ENCODE measurements at regions of chr3 and their contacts with region 1.

Region 1: GRCh38 chr3:115147329-115148141 is 447 bp upstream of the ZBTB20 start:
- DNase-seq: peak; percentile 97
- H3K4me3 Mint-ChIP-seq: peak overlapping the region; percentile 87
- H3K27ac Mint-ChIP-seq: peak overlapping the region; percentile 95
- H3K4me1 Mint-ChIP-seq: peaks cover 19% of the 10 kb centered on the region
- H3K27me3 Mint-ChIP-seq: no peaks in the 10 kb centered on the region

Region 2: DNA sequence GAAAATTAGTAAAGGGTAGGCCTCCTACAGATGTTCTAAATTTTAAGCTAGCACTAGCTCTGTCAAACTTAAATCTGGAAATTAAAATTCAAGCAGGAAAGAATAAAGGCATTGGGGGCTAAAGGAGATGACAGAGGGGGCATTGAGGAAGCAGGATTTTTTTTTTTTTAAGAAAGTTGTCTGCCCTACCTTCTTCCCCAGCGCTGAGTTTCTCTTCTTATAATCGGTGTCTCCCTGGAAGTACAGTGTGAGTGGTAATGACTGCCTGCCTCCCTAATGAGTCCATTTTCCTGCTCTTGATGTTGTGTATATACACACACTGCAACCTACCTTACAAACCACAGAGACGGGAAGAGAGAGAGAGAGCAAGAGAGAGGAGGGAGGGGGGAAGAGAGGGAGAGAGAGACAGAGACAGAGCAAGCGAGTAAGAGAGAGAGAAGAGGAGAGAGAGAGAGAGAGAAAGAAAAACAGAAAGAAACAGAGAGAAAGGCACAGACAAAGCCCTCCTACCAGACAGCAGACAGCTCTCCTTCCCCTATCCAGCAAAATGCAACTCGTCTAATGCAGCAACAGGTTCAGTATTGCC is 47.5 kb before region 1 on chr3:
- CTCF ChIA-PET with region 1: interaction called, 7 read pairs
- POLR2A ChIA-PET with region 1: interaction called, 19 read pairs
- DNase-seq: peak; percentile 26
- H3K4me3 Mint-ChIP-seq: peak overlapping the region; percentile 54
- H3K27ac Mint-ChIP-seq: peak overlapping the region; percentile 19
- H3K4me1 Mint-ChIP-seq: peaks cover 16% of the 10 kb centered on the region
- H3K27me3 Mint-ChIP-seq: no peaks in the 10 kb centered on the region

Region 3: DNA sequence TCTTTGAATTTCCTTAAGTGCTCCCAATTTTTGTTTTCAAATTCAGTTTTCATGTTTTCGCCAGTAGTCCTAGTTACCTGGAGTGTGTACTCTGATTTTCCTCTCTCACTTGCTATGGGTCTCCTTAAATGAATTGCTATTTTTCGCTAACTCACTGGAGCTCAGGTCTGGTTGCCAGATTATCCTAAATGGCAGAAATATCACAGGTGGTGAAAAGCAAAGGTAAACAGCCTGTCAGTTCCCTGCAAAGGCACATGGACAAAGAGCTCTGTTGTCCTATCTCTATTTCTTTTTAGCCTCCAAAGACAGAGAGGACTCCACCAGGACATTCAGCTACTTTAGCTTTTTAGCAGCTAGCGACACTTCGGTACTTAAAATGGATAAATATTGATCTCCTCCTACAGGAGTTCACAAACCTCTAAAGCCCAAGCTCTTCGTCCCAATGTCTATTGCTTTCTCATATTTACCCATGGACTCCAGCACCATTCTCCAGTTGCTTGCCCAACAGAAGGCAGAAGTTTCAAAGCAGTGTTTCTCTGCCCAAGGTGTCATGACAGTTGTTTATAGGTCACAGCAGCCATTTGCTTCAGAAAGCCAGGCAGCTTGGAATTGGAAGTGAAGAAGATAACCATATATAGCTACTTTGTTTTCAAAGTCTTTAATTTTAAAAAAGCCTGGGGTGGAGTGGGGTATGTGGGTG is 12.7 kb before region 1 on chr3:
- CTCF ChIA-PET with region 1: no interaction called
- POLR2A ChIA-PET with region 1: interaction called, 24 read pairs
- DNase-seq: no peak
- H3K4me3 Mint-ChIP-seq: no peak overlapping the region
- H3K27ac Mint-ChIP-seq: no peak overlapping the region
- H3K4me1 Mint-ChIP-seq: no peaks in the 10 kb centered on the region
- H3K27me3 Mint-ChIP-seq: no peaks in the 10 kb centered on the region

Region 4: DNA sequence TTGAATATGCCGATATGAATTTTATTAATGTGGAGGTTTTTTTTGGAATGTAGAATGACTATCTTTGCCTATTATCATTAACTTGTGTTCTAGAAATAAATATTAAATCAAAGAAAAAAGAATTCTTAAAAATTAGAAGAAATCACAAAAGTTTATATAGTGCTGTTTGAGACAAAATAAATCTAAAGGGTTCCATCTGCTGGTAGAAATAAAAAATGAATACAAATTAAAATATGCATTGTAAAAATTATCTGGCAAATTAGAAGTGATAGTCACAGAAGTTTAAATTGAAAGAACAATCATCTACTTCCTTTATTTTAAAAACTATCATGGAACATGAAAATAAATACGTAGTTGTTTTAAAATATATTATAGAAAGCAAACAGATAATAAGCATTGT is 22.3 kb after region 1 on chr3:
- CTCF ChIA-PET with region 1: interaction called, 5 read pairs
- POLR2A ChIA-PET with region 1: interaction called, 98 read pairs
- DNase-seq: no peak
- H3K4me3 Mint-ChIP-seq: no peak overlapping the region
- H3K27ac Mint-ChIP-seq: no peak overlapping the region
- H3K4me1 Mint-ChIP-seq: peaks cover 12% of the 10 kb centered on the region
- H3K27me3 Mint-ChIP-seq: no peaks in the 10 kb centered on the region

Region 5: GRCh38 chr3:115658337-115659181 is 511.0 kb after region 1 on chr3:
- CTCF ChIA-PET with region 1: no interaction called
- POLR2A ChIA-PET with region 1: interaction called, 15 read pairs
- DNase-seq: peak; percentile 77
- H3K4me3 Mint-ChIP-seq: peak overlapping the region; percentile 92
- H3K27ac Mint-ChIP-seq: peak overlapping the region; percentile 91
- H3K4me1 Mint-ChIP-seq: peaks cover 24% of the 10 kb centered on the region
- H3K27me3 Mint-ChIP-seq: peaks cover 2% of the 10 kb centered on the region

Measured in activated CD4-positive, alpha-beta memory T cell treated with anti-CD3 and anti-CD28 coated beads, Interleukin-2, amount 10 ng/mL, durations not matched to agents 7 days and 5 days (primary cell).